ENCODE measurements at regions of chr1 and their contacts with region 1.

Region 1: GRCh38 chr1:109041621-109042468 is at the start of gene WDR47:
- DNase-seq: peak; percentile 92 to 99 (median 96)
- ATAC-seq: peak; percentile 96
- H3K4me3 ChIP-seq: peak within 1 kb of the TSS; percentile 97 to 99
- H3K4me3 Mint-ChIP-seq: peak within 1 kb of the TSS; percentile 93
- H3K27ac ChIP-seq: peak within 1 kb of the TSS; percentile 81 to 94
- H3K27ac Mint-ChIP-seq: peak within 1 kb of the TSS; percentile 92
- H3K4me1 ChIP-seq: peaks cover 10% of the 10 kb centered on the region
- H3K4me1 Mint-ChIP-seq: peaks cover 16% of the 10 kb centered on the region
- H3K27me3 ChIP-seq: no peaks in the 10 kb centered on the region
- H3K27me3 Mint-ChIP-seq: no peaks in the 10 kb centered on the region
- CTCF ChIP-seq: no peak
- total RNA-seq, gene WDR47: 31.5 to 32.6 TPM

Region 2: GRCh38 chr1:108199781-108200570 is 841.9 kb before region 1 on chr1 and contains the start of gene SLC25A24:
- CTCF ChIA-PET with region 1: no interaction called
- POLR2A ChIA-PET with region 1: interaction called, 3 read pairs
- intact Hi-C with region 1: loop called in 1 of 2 experiments (anchors 5 kb)
- DNase-seq: peak; percentile 34 to 85 (median 72)
- ATAC-seq: peak; percentile 94
- H3K4me3 ChIP-seq: peak within 1 kb of the TSS; percentile 75 to 98
- H3K4me3 Mint-ChIP-seq: peak within 1 kb of the TSS; percentile 88
- H3K27ac ChIP-seq: peak within 1 kb of the TSS; percentile 70 to 72
- H3K27ac Mint-ChIP-seq: peak within 1 kb of the TSS; percentile 87
- H3K4me1 ChIP-seq: peaks cover 12% of the 10 kb centered on the region
- H3K4me1 Mint-ChIP-seq: peaks cover 31% of the 10 kb centered on the region
- H3K27me3 ChIP-seq: no peaks in the 10 kb centered on the region
- H3K27me3 Mint-ChIP-seq: no peaks in the 10 kb centered on the region
- CTCF ChIP-seq: no peak
- total RNA-seq, gene SLC25A24: 3.3 to 4.3 TPM

Region 3: DNA sequence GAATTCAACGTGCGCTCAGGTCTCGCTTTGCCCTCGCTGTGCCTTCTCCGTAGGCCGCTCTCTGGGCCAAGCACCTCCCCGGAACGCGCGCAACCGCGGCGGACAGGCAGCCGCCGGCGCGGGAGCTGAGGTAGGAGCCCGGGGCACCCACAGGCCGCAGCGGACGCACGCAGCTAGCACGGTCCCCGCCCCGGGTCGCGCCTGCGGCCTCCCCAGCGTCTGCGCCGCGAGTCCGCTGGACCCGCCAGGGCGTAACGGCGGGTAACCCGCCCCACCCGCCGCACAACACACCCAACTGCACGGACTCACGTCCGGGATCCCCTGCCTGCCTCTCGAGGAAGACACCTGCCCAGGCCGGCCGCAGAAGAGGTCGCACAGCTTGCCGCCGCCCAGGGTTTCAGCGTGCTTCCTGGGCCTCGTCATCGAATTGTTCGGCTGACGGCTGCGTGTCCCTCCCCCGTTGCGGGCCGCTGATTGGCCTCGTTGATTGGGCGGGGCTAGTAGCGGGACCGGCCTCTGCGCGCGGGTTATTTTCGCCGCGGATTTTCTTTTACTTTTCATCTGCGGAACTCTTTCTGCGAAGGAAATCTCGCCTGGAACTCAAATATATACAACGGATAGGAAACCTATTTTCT is 78.7 kb before region 1 on chr1 and contains the start of gene CLCC1:
- CTCF ChIA-PET with region 1: interaction called, 3 read pairs
- POLR2A ChIA-PET with region 1: interaction called, 7 read pairs
- intact Hi-C with region 1: loop called (anchors 1 kb)
- DNase-seq: peak; percentile 83 to 96 (median 91)
- ATAC-seq: peak; percentile 87
- H3K4me3 ChIP-seq: peak within 1 kb of the TSS; percentile 57 to 86
- H3K4me3 Mint-ChIP-seq: peak within 1 kb of the TSS; percentile 87
- H3K27ac ChIP-seq: peak within 1 kb of the TSS; percentile 75 to 88
- H3K27ac Mint-ChIP-seq: peak within 1 kb of the TSS; percentile 92
- H3K4me1 ChIP-seq: peaks cover 24% of the 10 kb centered on the region
- H3K4me1 Mint-ChIP-seq: peaks cover 39% of the 10 kb centered on the region
- H3K27me3 ChIP-seq: no peaks in the 10 kb centered on the region
- H3K27me3 Mint-ChIP-seq: no peaks in the 10 kb centered on the region
- CTCF ChIP-seq: no peak
- total RNA-seq, gene CLCC1: 4.6 to 5.8 TPM

Region 4: DNA sequence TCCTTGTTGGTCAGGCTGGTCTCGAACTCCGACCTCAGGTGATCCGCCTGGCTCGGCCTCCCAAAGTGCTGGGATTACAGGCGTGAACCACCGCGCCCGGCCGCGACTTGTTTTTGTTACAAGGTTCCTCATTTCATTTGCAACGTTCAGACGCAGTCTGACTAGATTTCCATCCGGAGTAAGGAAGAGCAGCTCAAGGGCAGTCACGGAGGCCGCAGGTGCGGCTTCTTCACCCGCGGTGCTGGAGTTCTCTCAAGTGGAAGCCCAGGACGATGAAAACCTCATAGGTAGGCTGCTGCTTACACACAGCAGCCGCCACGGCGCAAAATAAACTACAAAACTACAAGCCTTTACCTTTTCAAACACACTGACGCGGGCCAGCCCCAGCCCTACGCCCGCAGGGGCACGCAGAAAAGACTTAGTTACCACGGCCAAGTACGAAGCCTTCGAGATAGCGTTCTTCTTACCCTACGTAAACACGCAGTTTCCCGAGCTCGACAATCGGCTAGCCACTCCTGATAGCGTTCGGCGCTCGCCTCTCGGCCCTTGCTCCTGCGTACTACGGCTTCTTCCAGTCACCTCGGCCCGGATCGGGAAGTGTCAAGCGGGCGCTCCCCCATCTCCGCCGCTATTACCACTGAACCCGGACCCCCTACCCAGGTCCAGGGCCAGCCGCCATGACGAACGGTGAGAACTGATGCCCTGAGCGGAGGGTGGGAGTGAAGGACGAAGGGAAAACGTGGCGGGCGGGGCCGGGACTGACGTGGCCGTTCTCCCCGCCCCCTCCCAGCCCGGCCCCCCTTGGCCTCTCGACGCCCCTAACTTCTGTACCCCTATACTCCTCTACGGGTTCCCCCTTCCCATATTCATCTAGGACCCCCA is 48.6 kb after region 1 on chr1 and contains the start of gene TMEM167B:
- CTCF ChIA-PET with region 1: interaction called, 6 read pairs
- POLR2A ChIA-PET with region 1: interaction called, 3 read pairs
- intact Hi-C with region 1: loop called (anchors 1 kb)
- DNase-seq: peak; percentile 76 to 94 (median 88)
- ATAC-seq: peak; percentile 94
- H3K4me3 ChIP-seq: peak within 1 kb of the TSS; percentile 84 to 96
- H3K4me3 Mint-ChIP-seq: peak within 1 kb of the TSS; percentile 96
- H3K27ac ChIP-seq: peak within 1 kb of the TSS; percentile 82 to 98
- H3K27ac Mint-ChIP-seq: peak within 1 kb of the TSS; percentile 95
- H3K4me1 ChIP-seq: peaks cover 20% of the 10 kb centered on the region
- H3K4me1 Mint-ChIP-seq: peaks cover 33% of the 10 kb centered on the region
- H3K27me3 ChIP-seq: no peaks in the 10 kb centered on the region
- H3K27me3 Mint-ChIP-seq: no peaks in the 10 kb centered on the region
- CTCF ChIP-seq: no peak
- total RNA-seq, gene TMEM167B: 66.3 to 68.0 TPM

Region 5: GRCh38 chr1:109213785-109214468 is 172.1 kb after region 1 on chr1 and contains the start of gene SARS1:
- CTCF ChIA-PET with region 1: no interaction called
- POLR2A ChIA-PET with region 1: no interaction called
- intact Hi-C with region 1: loop called in 1 of 2 experiments (anchors 5 kb)
- DNase-seq: peak; percentile 67 to 94 (median 85)
- ATAC-seq: peak; percentile 86
- H3K4me3 ChIP-seq: peak within 1 kb of the TSS; percentile 96 to 100
- H3K4me3 Mint-ChIP-seq: peak within 1 kb of the TSS; percentile 100
- H3K27ac ChIP-seq: peak within 1 kb of the TSS; percentile 79
- H3K27ac Mint-ChIP-seq: peak within 1 kb of the TSS; percentile 95
- H3K4me1 ChIP-seq: peaks cover 27% of the 10 kb centered on the region
- H3K4me1 Mint-ChIP-seq: peaks cover 44% of the 10 kb centered on the region
- H3K27me3 ChIP-seq: no peaks in the 10 kb centered on the region
- H3K27me3 Mint-ChIP-seq: peaks cover 2% of the 10 kb centered on the region
- CTCF ChIP-seq: no peak
- total RNA-seq, gene SARS1: 113 to 118 TPM

Measured in CD8-positive, alpha-beta T cell (primary cell).